ENCODE measurements at regions of chrX and their contacts with region 1.

Region 1: GRCh38 chrX:130339408-130340222 is at the start of gene SLC25A14:
- DNase-seq: peak; percentile 72 to 77 (median 74)
- H3K4me3 ChIP-seq: peak within 1 kb of the TSS; percentile 65 to 77
- H3K4me3 Mint-ChIP-seq: peak within 1 kb of the TSS; percentile 92 to 98 (median 96)
- H3K27ac ChIP-seq: peak within 1 kb of the TSS; percentile 57
- H3K27ac Mint-ChIP-seq: peak within 1 kb of the TSS; percentile 82 to 96 (median 93)
- H3K4me1 ChIP-seq: peaks cover 6% of the 10 kb centered on the region
- H3K4me1 Mint-ChIP-seq: peaks cover 7 to 16% (median 12%) of the 10 kb centered on the region in 4 donors
- H3K27me3 ChIP-seq: no peaks in the 10 kb centered on the region
- H3K27me3 Mint-ChIP-seq: no peaks in the 10 kb centered on the region
- total RNA-seq, gene SLC25A14: 12.9 to 15.8 TPM

Region 2: GRCh38 chrX:130268500-130269170 is 71.0 kb before region 1 on chrX and contains the start of gene ZNF280C:
- CTCF ChIA-PET with region 1: no interaction called
- POLR2A ChIA-PET with region 1: interaction called, 8 read pairs
- intact Hi-C with region 1: loop called (anchors 1 kb)
- DNase-seq: peak; percentile 85 to 93 (median 90)
- H3K4me3 ChIP-seq: peak within 1 kb of the TSS; percentile 57 to 76
- H3K4me3 Mint-ChIP-seq: peak within 1 kb of the TSS; percentile 87 to 92 (median 89)
- H3K27ac ChIP-seq: peak within 1 kb of the TSS; percentile 67
- H3K27ac Mint-ChIP-seq: peak within 1 kb of the TSS; percentile 82 to 94 (median 88)
- H3K4me1 ChIP-seq: peaks cover 24% of the 10 kb centered on the region
- H3K4me1 Mint-ChIP-seq: peaks cover 5 to 20% (median 7%) of the 10 kb centered on the region in 4 donors
- H3K27me3 ChIP-seq: no peaks in the 10 kb centered on the region
- H3K27me3 Mint-ChIP-seq: no peaks in the 10 kb centered on the region
- total RNA-seq, gene ZNF280C: 4.0 to 4.9 TPM

Region 3: GRCh38 chrX:130401415-130402207 is 62.0 kb after region 1 on chrX and contains the start of gene RBMX2:
- CTCF ChIA-PET with region 1: no interaction called
- POLR2A ChIA-PET with region 1: interaction called, 10 read pairs
- intact Hi-C with region 1: loop called (anchors 1 kb)
- DNase-seq: peak; percentile 67 to 77 (median 74)
- H3K4me3 ChIP-seq: peak within 1 kb of the TSS; percentile 64 to 99
- H3K4me3 Mint-ChIP-seq: peak within 1 kb of the TSS; percentile 81 to 95 (median 86)
- H3K27ac ChIP-seq: peak within 1 kb of the TSS; percentile 71
- H3K27ac Mint-ChIP-seq: peak within 1 kb of the TSS; percentile 81 to 96 (median 94)
- H3K4me1 ChIP-seq: peaks cover 16% of the 10 kb centered on the region
- H3K4me1 Mint-ChIP-seq: peaks cover 7 to 33% (median 18%) of the 10 kb centered on the region in 4 donors
- H3K27me3 ChIP-seq: no peaks in the 10 kb centered on the region
- H3K27me3 Mint-ChIP-seq: peaks cover 7 to 10% of the 10 kb centered on the region in 2 donors
- total RNA-seq, gene RBMX2: 23.0 to 28.0 TPM